ENCODE measurements at regions of chr7 and their contacts with region 1.

Region 1: GRCh38 chr7:101542527-101543241 is 86.4 kb downstream of the MYL10 start:
- DNase-seq: peak; percentile 85
- H3K4me3 ChIP-seq: no peak overlapping the region; a peak in 1 of 4 replicates
- H3K27ac ChIP-seq: no peak overlapping the region
- H3K4me1 ChIP-seq: peaks cover 0 to under 1% of the 10 kb centered on the region in 2 experiments; a peak in 1 of 4 replicates
- H3K27me3 ChIP-seq: no peaks in the 10 kb centered on the region
- CTCF ChIP-seq: peak; percentile 99
- EP300 ChIP-seq: no peak
- RAD21 ChIP-seq: peak; percentile 97

Region 2: GRCh38 chr7:101125989-101126650 is 416.6 kb before region 1 on chr7:
- CTCF ChIA-PET with region 1: no interaction called
- POLR2A ChIA-PET with region 1: no interaction called
- DNase-seq: no peak
- H3K4me3 ChIP-seq: peak overlapping the region in 1 of 2 experiments; percentile 85; a peak in 2 of 4 replicates
- H3K27ac ChIP-seq: peak overlapping the region; percentile 61 to 98
- H3K4me1 ChIP-seq: peaks cover 14 to 44% of the 10 kb centered on the region in 2 experiments; a peak in 3 of 4 replicates
- H3K27me3 ChIP-seq: no peaks in the 10 kb centered on the region
- CTCF ChIP-seq: no peak
- EP300 ChIP-seq: peak in 1 of 2 experiments; percentile 72; a peak in 1 of 4 replicates
- RAD21 ChIP-seq: no peak

Region 3: DNA sequence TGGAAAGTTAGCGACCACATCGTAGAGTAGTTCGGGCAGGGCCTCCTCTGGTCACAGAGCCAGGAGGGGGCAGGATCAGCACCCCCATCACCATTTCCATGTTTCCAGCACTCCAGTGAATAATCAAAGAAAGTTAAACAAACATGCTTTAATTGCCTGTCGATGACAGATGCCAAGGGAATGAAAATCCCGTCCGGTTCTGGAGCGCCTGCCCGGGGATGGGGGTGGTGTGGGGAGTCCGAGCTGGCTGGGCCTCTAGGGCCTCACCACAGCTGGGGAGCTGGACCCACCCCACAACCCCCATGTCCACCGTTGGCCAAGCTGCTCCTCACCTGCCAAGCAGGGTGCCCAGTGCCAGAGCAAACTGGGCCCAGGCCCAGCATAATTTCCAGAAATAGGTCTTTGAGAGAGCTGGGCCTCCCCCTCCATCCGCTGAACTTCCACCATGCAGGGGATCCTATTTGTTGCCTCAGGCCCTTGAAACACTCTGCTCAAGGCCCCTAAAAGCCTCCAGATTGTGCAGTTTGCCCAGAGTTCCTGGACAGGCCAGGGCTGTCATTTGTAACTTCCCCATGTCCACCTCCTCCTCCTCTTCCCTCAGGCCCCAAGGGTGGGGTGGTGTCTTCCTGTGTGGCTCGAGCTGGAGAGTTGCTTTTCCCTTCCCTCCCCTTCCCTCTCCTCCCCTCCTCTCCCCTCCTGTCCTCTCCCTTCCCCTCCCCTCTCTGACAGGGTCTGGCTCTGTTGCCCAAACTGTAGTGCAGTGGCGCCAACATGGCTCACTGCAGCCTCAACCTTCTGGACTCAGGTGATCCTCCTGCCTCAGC is 14.6 kb before region 1 on chr7:
- CTCF ChIA-PET with region 1: interaction called, 11 read pairs
- POLR2A ChIA-PET with region 1: no interaction called
- DNase-seq: no peak
- H3K4me3 ChIP-seq: no peak overlapping the region
- H3K27ac ChIP-seq: no peak overlapping the region
- H3K4me1 ChIP-seq: peaks cover 0 to 2% of the 10 kb centered on the region in 2 experiments; a peak in 1 of 4 replicates
- H3K27me3 ChIP-seq: no peaks in the 10 kb centered on the region
- CTCF ChIP-seq: no peak
- EP300 ChIP-seq: no peak
- RAD21 ChIP-seq: no peak

Region 4: GRCh38 chr7:101588131-101588935 is 45.6 kb after region 1 on chr7:
- CTCF ChIA-PET with region 1: interaction called, 11 read pairs
- POLR2A ChIA-PET with region 1: no interaction called
- DNase-seq: no peak
- H3K4me3 ChIP-seq: no peak overlapping the region
- H3K27ac ChIP-seq: no peak overlapping the region
- H3K4me1 ChIP-seq: peaks cover 0 to 15% of the 10 kb centered on the region in 2 experiments; a peak in 1 of 4 replicates
- H3K27me3 ChIP-seq: no peaks in the 10 kb centered on the region
- CTCF ChIP-seq: no peak
- EP300 ChIP-seq: no peak
- RAD21 ChIP-seq: no peak

Region 5: GRCh38 chr7:101688183-101688831 is 145.6 kb after region 1 on chr7:
- CTCF ChIA-PET with region 1: interaction called, 18 read pairs
- POLR2A ChIA-PET with region 1: no interaction called
- DNase-seq: peak; percentile 98
- H3K4me3 ChIP-seq: peak overlapping the region; percentile 14 to 53; a peak in 3 of 4 replicates
- H3K27ac ChIP-seq: no peak overlapping the region
- H3K4me1 ChIP-seq: peaks cover 0 to 6% of the 10 kb centered on the region in 2 experiments; a peak in 1 of 4 replicates
- H3K27me3 ChIP-seq: no peaks in the 10 kb centered on the region
- CTCF ChIP-seq: peak; percentile 95
- EP300 ChIP-seq: no peak
- RAD21 ChIP-seq: peak; percentile 92

Region 6: GRCh38 chr7:102230593-102230992 is 687.9 kb after region 1 on chr7:
- CTCF ChIA-PET with region 1: interaction called, 20 read pairs
- POLR2A ChIA-PET with region 1: no interaction called
- DNase-seq: no peak
- H3K4me3 ChIP-seq: no peak overlapping the region
- H3K27ac ChIP-seq: no peak overlapping the region; a peak in 1 of 4 replicates
- H3K4me1 ChIP-seq: no peaks in the 10 kb centered on the region; a peak in 1 of 4 replicates
- H3K27me3 ChIP-seq: no peaks in the 10 kb centered on the region
- CTCF ChIP-seq: no peak
- EP300 ChIP-seq: no peak
- RAD21 ChIP-seq: no peak

Region 7: DNA sequence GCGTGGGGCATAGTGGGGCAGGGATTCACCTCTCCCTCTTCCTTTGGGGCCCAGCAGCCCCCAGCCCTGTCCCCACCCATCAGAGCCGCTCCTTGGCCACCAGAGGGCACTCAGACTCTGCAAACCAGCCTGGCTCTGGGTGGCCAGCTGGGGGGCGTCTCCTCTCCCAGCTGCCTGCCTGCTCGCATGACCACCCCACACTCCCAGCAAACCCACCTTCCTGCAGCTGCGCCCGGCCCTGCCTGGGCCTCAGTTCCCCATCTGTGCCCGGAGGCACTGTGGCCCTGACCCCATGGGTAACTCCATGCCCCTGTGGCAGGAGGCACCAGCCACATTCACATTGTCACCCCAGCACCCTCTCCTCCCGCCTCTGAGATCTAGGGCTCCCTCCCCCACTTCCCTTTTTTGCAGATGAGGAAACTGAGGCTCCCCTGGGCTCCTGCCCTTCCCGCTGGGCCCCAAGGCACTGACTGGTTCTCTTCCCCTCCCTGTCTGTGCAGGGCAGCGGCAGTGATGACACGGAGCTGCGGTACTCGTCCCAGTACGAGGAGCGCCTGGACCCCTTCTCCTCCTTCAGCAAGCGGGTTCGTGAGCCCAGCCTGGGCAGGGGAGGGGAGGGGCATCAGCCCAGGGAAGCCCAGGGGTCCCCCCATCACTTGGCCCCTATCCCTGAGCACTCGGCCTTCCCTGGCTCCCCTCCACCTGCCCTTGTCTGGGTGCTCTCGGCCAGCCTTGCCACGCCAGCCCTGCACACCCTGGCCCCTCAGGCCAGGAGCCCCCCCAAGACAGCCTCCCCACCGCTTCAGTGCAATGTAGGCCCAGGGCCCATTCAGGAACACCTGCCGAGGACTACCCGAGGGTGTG is 737.1 kb after region 1 on chr7:
- CTCF ChIA-PET with region 1: interaction called, 119 read pairs
- POLR2A ChIA-PET with region 1: no interaction called
- DNase-seq: peak; percentile 98
- H3K4me3 ChIP-seq: no peak overlapping the region; a peak in 1 of 4 replicates
- H3K27ac ChIP-seq: no peak overlapping the region; a peak in 1 of 4 replicates
- H3K4me1 ChIP-seq: peaks cover 0 to 6% of the 10 kb centered on the region in 2 experiments; a peak in 1 of 4 replicates
- H3K27me3 ChIP-seq: no peaks in the 10 kb centered on the region
- CTCF ChIP-seq: peak; percentile 99
- EP300 ChIP-seq: no peak
- RAD21 ChIP-seq: peak; percentile 94

Measured in SK-N-SH (cell line).